ENCODE measurements at regions of chr17 and their contacts with region 1.

Region 1: DNA sequence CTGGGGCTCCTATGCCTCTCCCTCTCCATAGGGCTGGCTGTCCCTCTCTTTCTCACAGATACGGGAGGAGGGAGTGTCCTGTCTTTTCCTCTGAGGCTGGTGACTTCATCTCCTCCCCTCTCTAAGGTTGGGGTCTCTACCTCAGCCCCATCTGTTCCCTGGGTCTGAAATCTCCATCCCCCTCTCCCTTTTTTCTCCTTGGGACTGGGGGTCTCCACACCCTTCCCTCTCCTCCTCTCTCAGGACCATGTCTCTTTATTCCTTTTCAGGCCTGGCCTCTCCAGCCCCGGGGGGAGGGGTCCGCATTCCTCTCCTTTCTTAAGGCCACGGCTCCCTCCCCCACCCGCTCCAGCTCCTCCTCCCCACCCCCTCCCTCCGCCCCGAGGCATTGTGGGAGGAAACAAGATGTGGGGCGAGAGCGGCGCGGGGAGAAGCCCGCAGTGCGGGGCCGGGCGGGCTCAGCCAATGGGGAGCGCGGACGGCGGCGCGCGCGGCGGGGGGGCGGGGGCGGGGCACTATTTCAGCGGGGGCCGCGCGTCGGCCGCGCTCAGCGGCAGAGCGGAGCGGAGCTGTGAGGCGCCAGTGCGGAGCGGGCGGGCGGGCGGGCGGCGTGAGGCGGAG is at the start of gene DYNLL2:
- DNase-seq: peak; percentile 92
- H3K4me3 ChIP-seq: peak within 1 kb of the TSS; percentile 100
- H3K27ac ChIP-seq: peak within 1 kb of the TSS; percentile 50
- H3K4me1 ChIP-seq: peaks cover 18% of the 10 kb centered on the region
- CTCF ChIP-seq: no peak
- total RNA-seq, gene DYNLL2: 12.4 and 13.4 TPM in 2 replicates

Region 2: DNA sequence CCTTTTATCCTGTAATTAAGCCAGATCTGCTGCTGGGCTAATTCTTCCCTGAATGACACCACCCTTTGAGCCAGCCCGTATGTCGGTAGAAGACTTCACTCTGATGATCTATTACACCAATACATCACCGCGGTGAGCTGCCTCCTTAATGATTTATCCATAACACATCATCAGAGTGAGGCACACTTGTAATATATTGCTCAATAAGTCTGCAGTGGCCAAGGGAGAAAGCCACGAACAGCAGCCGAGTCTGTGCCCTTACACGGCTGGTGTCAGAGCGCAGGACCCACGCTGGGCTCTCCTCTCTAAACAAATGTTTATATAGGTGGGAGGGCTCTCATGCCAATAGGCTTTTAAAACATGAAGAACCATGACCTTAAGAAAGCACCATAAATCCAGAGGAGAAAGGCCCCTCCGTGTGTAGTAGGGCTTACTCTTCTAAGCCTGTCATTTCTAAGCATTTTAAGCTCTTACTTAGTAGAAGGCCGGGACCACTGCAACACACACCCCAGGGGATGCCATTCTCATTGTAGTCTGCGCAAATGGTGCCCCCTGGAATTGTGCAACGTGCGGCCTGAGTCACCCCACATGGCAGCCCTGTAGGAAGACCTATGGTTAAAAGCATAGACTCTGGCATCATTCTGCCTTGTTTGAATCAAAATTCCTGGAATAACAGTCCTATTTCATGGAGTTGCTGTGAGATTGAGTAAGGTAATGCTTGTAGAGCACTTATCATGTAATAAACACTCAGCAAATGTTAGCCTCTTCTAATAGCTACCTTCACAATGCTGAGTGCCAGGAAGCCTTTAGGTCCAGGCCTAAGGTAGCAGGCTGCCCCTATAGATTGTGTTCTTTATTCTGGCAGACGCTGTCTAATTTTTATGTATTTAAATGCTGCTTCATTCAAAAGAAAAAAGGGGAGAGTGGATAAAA is 259.2 kb before region 1 on chr17:
- CTCF ChIA-PET with region 1: no interaction called
- POLR2A ChIA-PET with region 1: no interaction called
- intact Hi-C with region 1: no loop called
- DNase-seq: no peak
- H3K4me3 ChIP-seq: no peak overlapping the region
- H3K27ac ChIP-seq: no peak overlapping the region
- H3K4me1 ChIP-seq: no peaks in the 10 kb centered on the region
- CTCF ChIP-seq: no peak

Region 3: DNA sequence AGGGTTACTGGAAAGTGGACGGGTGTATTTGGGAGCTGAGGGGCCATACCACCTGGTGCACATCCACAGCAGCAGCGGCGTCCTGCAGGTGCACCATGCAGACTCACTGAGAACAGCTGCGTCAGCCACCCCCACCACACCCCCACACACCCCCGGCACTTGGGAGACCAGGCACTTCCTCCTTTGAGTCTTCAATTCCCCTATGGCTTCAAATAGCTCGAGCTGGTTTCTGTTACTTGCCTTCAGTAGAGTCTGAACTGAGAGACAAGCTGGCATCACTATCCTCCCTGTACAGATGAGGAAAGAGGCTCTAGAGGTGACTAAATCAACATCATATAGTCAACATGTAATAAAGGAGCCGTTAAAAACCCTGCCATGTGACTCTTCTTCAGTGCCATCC is 143.2 kb before region 1 on chr17:
- CTCF ChIA-PET with region 1: no interaction called
- POLR2A ChIA-PET with region 1: no interaction called
- intact Hi-C with region 1: no loop called
- DNase-seq: peak; percentile 95
- H3K4me3 ChIP-seq: peak overlapping the region; percentile 36
- H3K27ac ChIP-seq: peak overlapping the region; percentile 22
- H3K4me1 ChIP-seq: peaks cover 31% of the 10 kb centered on the region
- CTCF ChIP-seq: no peak

Region 4: DNA sequence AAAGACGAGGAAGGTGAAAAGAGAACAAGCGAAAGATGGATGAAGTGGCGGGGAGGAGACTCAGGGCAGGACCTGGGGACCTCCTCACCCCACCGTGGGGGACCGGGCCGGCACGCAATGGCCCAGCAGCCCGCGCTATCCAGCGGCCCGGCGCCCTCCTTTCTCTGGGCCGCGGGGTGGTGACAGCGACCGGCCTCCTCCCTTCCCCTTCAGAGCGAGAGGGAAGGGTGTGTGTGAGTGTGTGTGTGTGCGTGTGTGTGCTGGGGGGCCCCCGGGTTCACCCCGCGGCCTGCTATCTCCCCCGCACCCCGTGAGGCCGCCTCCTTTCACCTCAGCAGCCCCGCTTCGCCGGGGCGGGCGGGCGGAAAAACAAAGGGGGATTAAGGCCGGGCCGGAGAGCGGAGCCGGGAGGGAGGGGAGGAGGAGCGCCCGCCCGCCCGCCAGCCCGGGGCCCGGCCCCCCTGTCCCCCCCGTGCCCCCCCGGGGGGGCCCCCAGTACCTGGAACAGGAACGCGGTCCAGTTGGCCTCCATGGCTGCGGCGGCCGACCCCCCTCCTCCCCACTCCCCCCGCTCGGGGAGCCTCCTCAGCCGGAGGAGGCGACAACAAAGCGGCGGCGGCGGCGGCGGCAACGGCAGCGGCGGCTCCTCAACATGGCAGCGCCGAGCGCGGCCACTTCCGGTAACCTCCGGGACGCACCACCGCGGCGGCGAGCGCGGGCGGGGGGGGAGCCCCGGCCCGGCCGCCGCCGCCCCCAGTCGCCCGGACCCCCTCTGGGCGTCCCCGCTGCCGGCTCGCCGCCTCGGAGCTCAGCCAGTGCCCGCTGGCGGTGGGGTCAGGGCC is 95.2 kb before region 1 on chr17 and contains the start of gene VEZF1:
- CTCF ChIA-PET with region 1: no interaction called
- POLR2A ChIA-PET with region 1: no interaction called
- intact Hi-C with region 1: no loop called
- DNase-seq: peak; percentile 89
- H3K4me3 ChIP-seq: peak within 1 kb of the TSS; percentile 77
- H3K27ac ChIP-seq: peak within 1 kb of the TSS; percentile 56
- H3K4me1 ChIP-seq: peaks cover 23% of the 10 kb centered on the region
- CTCF ChIP-seq: no peak
- total RNA-seq, gene VEZF1: 19.0 and 22.6 TPM in 2 replicates

Region 5: GRCh38 chr17:58001461-58002124 is 81.4 kb before region 1 on chr17:
- CTCF ChIA-PET with region 1: no interaction called
- POLR2A ChIA-PET with region 1: interaction called, 10 read pairs
- intact Hi-C with region 1: loop called (anchors 1 kb)
- DNase-seq: no peak
- H3K4me3 ChIP-seq: peak overlapping the region; percentile 96
- H3K27ac ChIP-seq: peak overlapping the region; percentile 1
- H3K4me1 ChIP-seq: peaks cover 61% of the 10 kb centered on the region
- CTCF ChIP-seq: no peak

Region 6: DNA sequence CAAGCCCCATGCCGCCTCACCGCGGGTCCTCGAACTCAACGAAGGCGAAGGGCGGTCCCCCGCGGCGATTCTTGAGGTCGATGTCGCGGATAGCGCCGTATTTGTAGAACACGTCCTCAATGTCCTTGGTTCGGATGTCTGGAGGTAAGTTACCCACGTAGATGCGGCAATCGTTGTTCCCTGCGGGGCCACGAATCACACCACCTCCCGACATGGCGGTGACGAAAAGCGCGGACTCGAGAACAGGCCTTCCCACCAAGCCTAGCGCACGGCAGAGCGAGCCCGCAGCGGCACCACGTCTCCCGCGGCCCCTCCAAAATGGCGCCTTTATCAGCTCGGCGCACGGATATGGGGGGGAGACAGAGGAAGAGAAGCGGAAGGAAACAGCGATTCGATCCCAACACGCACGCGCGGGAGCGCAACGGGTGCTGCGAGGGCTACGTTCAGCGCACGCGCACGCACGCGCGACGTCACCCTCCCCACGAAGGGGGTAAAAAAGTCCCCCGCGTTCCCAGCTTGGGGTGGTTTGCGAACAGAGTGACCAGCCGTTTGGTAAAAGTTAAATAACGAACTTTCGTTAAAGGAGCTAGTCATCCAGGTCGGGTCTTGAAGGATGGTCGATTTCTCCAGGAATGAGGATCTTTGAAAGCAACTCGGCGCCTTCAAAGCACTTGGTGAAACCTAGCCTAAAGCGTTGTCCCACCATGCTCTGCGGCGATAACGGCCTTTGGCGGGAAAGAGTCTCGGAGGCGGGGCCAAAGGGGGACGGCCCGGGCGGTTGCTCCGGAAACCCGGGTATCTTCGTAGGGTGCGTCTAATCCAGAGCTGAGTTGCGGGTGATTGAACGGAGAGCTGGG is 75.8 kb before region 1 on chr17 and contains the start of gene SRSF1:
- CTCF ChIA-PET with region 1: no interaction called
- POLR2A ChIA-PET with region 1: interaction called, 10 read pairs
- intact Hi-C with region 1: loop called (anchors 1 kb)
- DNase-seq: peak; percentile 99
- H3K4me3 ChIP-seq: peak within 1 kb of the TSS; percentile 96
- H3K27ac ChIP-seq: peak within 1 kb of the TSS; percentile 89
- H3K4me1 ChIP-seq: peaks cover 45% of the 10 kb centered on the region
- CTCF ChIP-seq: no peak
- total RNA-seq, gene SRSF1: 582 and 677 TPM in 2 replicates

Region 7: DNA sequence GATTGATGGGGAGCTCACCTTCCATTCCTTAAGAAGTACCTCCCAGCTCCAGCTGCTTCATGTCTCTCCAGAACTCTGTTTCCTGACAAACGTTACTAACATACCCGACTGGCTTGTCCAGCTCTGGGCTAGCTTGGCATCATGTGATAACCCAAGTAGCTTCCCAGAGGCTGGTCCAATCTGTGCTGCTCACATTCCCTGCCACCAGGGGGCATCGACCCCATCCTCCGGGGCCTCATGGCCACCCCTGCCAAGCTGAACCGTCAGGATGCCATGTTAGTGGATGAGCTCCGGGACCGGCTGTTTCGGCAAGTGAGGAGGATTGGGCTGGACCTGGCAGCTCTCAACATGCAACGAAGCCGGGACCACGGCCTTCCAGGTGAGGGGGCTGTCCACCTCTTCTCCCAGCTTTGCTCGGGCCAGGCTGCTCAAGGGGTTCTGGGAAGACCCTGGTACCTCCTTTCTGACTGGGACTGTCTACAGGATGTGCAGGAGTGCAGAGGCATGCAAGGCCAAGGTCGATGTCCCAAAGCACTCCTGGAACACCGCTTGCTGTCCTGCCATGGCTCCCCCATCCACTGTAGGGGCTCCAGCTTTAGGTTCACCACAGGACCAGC is 117.1 kb after region 1 on chr17:
- CTCF ChIA-PET with region 1: no interaction called
- POLR2A ChIA-PET with region 1: no interaction called
- intact Hi-C with region 1: no loop called
- DNase-seq: peak; percentile 48
- H3K4me3 ChIP-seq: no peak overlapping the region
- H3K27ac ChIP-seq: no peak overlapping the region
- H3K4me1 ChIP-seq: no peaks in the 10 kb centered on the region
- CTCF ChIP-seq: peak; percentile 80

Measured in OCI-LY7 (cell line).